ENCODE measurements at regions of chr5 and their contacts with region 1.

Region 1: DNA sequence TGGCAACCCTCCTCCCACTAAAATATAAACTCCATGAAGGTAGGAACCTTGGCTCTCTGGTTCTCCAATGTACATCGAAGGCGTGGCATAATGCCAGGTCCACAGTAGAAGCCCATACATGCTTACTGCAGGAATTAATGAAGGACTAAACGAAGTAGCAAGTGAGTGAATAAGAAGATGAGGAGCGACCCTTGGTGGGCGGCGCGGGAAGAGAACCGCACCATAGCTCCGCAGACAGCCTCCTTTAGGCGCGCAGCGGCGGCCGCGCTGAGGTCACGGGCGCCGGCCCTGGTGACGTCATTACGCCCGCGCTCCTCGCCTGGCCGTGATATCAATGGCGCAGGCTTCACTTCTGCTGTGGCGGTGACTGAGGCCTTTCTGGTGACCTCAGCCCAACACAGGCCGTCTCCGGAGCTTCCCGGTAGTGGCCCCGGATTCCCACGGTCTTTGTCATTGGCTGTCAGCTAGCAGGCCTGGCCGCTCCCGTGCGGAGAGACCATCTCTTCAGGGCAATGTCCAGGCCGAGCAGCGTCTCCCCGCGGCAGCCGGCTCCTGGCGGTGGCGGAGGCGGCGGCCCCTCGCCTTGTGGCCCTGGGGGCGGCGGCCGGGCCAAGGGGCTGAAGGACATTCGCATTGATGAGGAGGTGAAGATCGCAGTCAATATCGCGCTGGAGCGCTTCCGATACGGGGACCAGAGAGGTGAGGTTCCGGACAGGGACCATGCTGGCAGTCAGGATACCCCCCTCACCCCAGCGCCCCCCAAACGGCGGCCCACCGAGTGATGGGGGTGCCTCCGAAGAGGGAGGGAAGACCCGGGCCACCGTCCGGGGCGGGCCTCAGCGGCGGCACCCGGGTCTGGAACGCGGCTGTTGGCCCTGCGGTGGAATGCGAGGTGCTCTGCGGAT is at the start of gene YTHDC2:
- DNase-seq: peak; percentile 87 to 91 (median 91)
- ATAC-seq: peak; percentile 98
- H3K4me3 ChIP-seq: peak within 1 kb of the TSS; percentile 57
- H3K4me1 ChIP-seq: peaks cover 17% of the 10 kb centered on the region
- CTCF ChIP-seq: no peak
- total RNA-seq, gene YTHDC2: 19.3 to 23.5 (median 22.4) TPM

Region 2: GRCh38 chr5:112995764-112996618 is 517.6 kb before region 1 on chr5:
- intact Hi-C with region 1: loop called in 1 of 2 experiments (anchors 10 kb)
- DNase-seq: peak in 2 of 3 donors; percentile 53 to 88
- ATAC-seq: peak; percentile 85
- H3K4me3 ChIP-seq: no peak overlapping the region
- H3K4me1 ChIP-seq: no peaks in the 10 kb centered on the region
- CTCF ChIP-seq: peak; percentile 84

Region 3: GRCh38 chr5:113378959-113379541 is 134.6 kb before region 1 on chr5:
- intact Hi-C with region 1: loop called in 1 of 2 experiments (anchors 5 kb)
- DNase-seq: peak in 2 of 3 donors; percentile 26 to 61
- ATAC-seq: peak; percentile 70
- H3K4me3 ChIP-seq: no peak overlapping the region
- H3K4me1 ChIP-seq: no peaks in the 10 kb centered on the region
- CTCF ChIP-seq: peak; percentile 26

Measured in mucosa of descending colon (tissue), 3 donors.